ENCODE measurements at regions of chr12 and their contacts with region 1.

Region 1: GRCh38 chr12:71663561-71664294 is at the start of gene ZFC3H1:
- DNase-seq: peak; percentile 94
- H3K4me3 Mint-ChIP-seq: peak within 1 kb of the TSS; percentile 97
- H3K27ac Mint-ChIP-seq: peak within 1 kb of the TSS; percentile 100
- H3K4me1 Mint-ChIP-seq: peaks cover 39% of the 10 kb centered on the region
- H3K27me3 Mint-ChIP-seq: no peaks in the 10 kb centered on the region
- total RNA-seq, gene ZFC3H1: 55.9 to 64.9 TPM

Region 2: DNA sequence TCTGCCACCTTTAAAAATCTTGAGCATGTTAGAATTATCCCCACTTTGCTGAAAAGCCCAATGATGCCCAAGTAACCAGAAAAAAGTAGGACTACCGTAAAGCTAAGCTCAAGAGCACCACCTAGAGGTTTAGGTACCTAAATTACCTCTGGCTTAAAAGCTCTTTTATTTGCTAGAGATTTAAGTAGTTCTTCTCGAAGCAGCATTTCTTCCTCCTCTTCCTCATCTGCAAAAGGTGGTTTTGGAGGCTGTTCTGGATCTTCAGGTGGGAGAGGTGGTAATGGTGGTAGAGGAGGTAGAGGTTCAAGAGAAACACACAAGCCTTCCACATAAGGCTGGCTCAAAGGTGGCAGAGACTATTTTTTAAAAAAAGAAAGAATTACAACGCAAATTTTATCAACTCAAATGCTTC is 27.0 kb before region 1 on chr12:
- CTCF ChIA-PET with region 1: interaction called, 50 read pairs
- POLR2A ChIA-PET with region 1: interaction called, 19 read pairs
- intact Hi-C with region 1: no loop called
- DNase-seq: no peak
- H3K4me3 Mint-ChIP-seq: no peak overlapping the region
- H3K27ac Mint-ChIP-seq: peak overlapping the region; percentile 46
- H3K4me1 Mint-ChIP-seq: peaks cover 28% of the 10 kb centered on the region
- H3K27me3 Mint-ChIP-seq: no peaks in the 10 kb centered on the region

Region 3: GRCh38 chr12:71652656-71653055 is 11.1 kb before region 1 on chr12:
- CTCF ChIA-PET with region 1: no interaction called
- POLR2A ChIA-PET with region 1: interaction called, 9 read pairs
- intact Hi-C with region 1: loop called (anchors 1 kb)
- DNase-seq: no peak
- H3K4me3 Mint-ChIP-seq: no peak overlapping the region
- H3K27ac Mint-ChIP-seq: no peak overlapping the region
- H3K4me1 Mint-ChIP-seq: peaks cover 42% of the 10 kb centered on the region
- H3K27me3 Mint-ChIP-seq: no peaks in the 10 kb centered on the region

Region 4: DNA sequence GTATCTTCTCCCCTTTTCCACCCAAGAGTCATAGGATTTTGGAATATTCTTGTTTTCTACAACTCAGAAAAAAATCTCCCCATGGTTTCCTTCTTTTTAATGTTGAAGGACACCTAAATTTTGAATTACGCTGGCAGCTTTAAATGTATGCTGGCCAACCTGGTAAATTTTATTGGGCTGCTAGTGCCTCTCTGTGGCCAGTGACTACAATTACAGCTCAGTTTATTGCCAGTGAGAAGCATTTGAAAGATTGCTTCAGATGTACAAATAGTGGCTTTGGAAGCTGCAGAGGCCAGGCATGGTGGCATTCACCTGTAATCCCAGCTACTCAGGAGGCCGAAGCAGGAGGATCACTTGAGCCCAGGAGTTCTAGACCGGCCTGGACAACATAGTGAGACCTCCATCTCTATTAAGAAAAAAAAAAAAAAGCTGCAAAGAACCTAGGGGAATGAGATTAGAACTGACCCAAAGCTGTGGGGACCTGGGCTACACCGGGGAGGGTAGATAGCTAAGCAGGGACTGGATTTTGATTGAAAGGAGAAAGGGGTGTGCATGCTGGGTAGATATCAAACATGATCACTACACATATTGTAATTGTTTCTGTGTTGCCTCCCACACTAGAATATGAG is 83.4 kb after region 1 on chr12:
- CTCF ChIA-PET with region 1: interaction called, 26 read pairs
- POLR2A ChIA-PET with region 1: interaction called, 5 read pairs
- intact Hi-C with region 1: loop called (anchors 2 kb)
- DNase-seq: peak; percentile 55
- H3K4me3 Mint-ChIP-seq: no peak overlapping the region
- H3K27ac Mint-ChIP-seq: no peak overlapping the region
- H3K4me1 Mint-ChIP-seq: peaks cover 2% of the 10 kb centered on the region
- H3K27me3 Mint-ChIP-seq: peaks cover 1% of the 10 kb centered on the region

Region 5: GRCh38 chr12:71840231-71840847 is 176.6 kb after region 1 on chr12:
- CTCF ChIA-PET with region 1: no interaction called
- POLR2A ChIA-PET with region 1: interaction called, 13 read pairs
- intact Hi-C with region 1: loop called (anchors 1 kb)
- DNase-seq: peak; percentile 18
- H3K4me3 Mint-ChIP-seq: peak overlapping the region; percentile 97
- H3K27ac Mint-ChIP-seq: peak overlapping the region; percentile 99
- H3K4me1 Mint-ChIP-seq: peaks cover 32% of the 10 kb centered on the region
- H3K27me3 Mint-ChIP-seq: no peaks in the 10 kb centered on the region